GM12878 (cell line): ENCODE measurements at regions of chr12 and their contacts with region 1.

Region 1: GRCh38 chr12:93109551-93110203 is 180.6 kb upstream of the EEA1 start:
- DNase-seq: no peak
- ATAC-seq: peak; percentile 95
- H3K4me3 ChIP-seq: no peak overlapping the region
- H3K27ac ChIP-seq: no peak overlapping the region
- H3K4me1 ChIP-seq: peaks cover 14% of the 10 kb centered on the region
- H3K27me3 ChIP-seq: no peaks in the 10 kb centered on the region
- CTCF ChIP-seq: no peak
- EP300 ChIP-seq: peak; percentile 58 to 77
- POLR2A ChIP-seq: no peak
- RAD21 ChIP-seq: no peak; the same call in 1 of the 2 replicates

Region 2: GRCh38 chr12:93127582-93128331 is 18.1 kb after region 1 on chr12:
- CTCF ChIA-PET with region 1: interaction called, 3 read pairs
- POLR2A ChIA-PET with region 1: interaction called, 4 read pairs
- RAD21 ChIA-PET with region 1: interaction called, 3 read pairs
- SMC1A ChIA-PET with region 1: interaction called, 11 read pairs
- in situ Hi-C with region 1: no loop called
- intact Hi-C with region 1: no loop called
- DNase-seq: no peak
- ATAC-seq: no peak
- H3K4me3 ChIP-seq: no peak overlapping the region
- H3K27ac ChIP-seq: no peak overlapping the region
- H3K4me1 ChIP-seq: peaks cover 18% of the 10 kb centered on the region
- H3K27me3 ChIP-seq: no peaks in the 10 kb centered on the region
- CTCF ChIP-seq: no peak
- EP300 ChIP-seq: no peak
- POLR2A ChIP-seq: no peak
- RAD21 ChIP-seq: peak; percentile 26; the same call in 1 of the 2 replicates

Region 3: GRCh38 chr12:93146263-93146939 is 36.7 kb after region 1 on chr12:
- CTCF ChIA-PET with region 1: no interaction called
- POLR2A ChIA-PET with region 1: no interaction called
- RAD21 ChIA-PET with region 1: no interaction called
- SMC1A ChIA-PET with region 1: interaction called, 90 read pairs
- in situ Hi-C with region 1: no loop called
- intact Hi-C with region 1: no loop called
- DNase-seq: no peak
- ATAC-seq: no peak
- H3K4me3 ChIP-seq: no peak overlapping the region
- H3K27ac ChIP-seq: no peak overlapping the region
- H3K4me1 ChIP-seq: no peaks in the 10 kb centered on the region
- H3K27me3 ChIP-seq: no peaks in the 10 kb centered on the region
- CTCF ChIP-seq: no peak
- EP300 ChIP-seq: no peak
- POLR2A ChIP-seq: no peak
- RAD21 ChIP-seq: no peak